ENCODE measurements at regions of chr5 and their contacts with region 1.

Region 1: DNA sequence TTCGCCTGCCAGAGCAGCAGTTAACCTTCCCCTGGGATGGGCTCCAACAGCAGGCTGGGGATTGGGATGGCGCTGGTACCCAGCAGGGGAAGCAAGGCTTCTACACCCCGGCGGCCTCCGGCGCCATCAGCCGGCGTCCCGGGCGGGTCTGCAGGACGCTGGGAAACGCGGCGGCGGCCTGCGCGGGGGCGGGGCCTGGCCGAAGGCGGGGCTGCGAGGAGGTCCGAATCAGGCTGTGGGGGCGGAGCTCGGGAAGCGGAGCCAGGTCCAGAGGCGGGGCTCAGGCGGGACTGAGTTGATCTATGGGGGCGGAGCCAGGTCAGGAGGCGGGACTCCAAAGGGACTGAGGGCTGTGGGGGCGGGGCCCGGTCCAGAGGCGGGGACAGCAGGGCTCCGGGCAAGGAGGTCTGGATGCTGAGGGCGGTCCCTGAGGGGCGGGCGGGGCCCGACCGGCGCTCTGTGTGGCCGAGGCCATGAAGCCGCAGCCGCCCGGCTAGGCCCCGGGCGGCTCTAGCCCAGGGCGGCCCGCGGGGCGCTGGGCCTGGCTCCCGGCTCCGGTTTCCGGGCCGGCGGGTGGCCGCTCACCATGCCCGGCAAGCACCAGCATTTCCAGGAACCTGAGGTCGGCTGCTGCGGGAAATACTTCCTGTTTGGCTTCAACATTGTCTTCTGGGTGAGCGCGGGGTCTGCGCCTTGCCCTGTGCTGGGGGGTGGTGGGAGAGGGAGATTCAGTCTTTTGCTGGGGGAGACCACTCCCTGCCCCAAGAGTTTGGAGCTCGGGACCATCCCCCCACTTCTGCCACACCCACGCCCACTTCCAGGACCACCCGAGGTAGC is at the start of gene TSPAN17:
- DNase-seq: peak; percentile 100
- ATAC-seq: peak; percentile 98
- total RNA-seq, gene TSPAN17: 27.4 TPM

Region 2: GRCh38 chr5:176573564-176574296 is 73.5 kb before region 1 on chr5:
- intact Hi-C with region 1: loop called (anchors 10 kb)
- DNase-seq: peak; percentile 83
- ATAC-seq: peak; percentile 94

Measured in Right ventricle myocardium superior (tissue), 1 donor.